ENCODE measurements at regions of chr11 and their contacts with region 1.

Region 1: DNA sequence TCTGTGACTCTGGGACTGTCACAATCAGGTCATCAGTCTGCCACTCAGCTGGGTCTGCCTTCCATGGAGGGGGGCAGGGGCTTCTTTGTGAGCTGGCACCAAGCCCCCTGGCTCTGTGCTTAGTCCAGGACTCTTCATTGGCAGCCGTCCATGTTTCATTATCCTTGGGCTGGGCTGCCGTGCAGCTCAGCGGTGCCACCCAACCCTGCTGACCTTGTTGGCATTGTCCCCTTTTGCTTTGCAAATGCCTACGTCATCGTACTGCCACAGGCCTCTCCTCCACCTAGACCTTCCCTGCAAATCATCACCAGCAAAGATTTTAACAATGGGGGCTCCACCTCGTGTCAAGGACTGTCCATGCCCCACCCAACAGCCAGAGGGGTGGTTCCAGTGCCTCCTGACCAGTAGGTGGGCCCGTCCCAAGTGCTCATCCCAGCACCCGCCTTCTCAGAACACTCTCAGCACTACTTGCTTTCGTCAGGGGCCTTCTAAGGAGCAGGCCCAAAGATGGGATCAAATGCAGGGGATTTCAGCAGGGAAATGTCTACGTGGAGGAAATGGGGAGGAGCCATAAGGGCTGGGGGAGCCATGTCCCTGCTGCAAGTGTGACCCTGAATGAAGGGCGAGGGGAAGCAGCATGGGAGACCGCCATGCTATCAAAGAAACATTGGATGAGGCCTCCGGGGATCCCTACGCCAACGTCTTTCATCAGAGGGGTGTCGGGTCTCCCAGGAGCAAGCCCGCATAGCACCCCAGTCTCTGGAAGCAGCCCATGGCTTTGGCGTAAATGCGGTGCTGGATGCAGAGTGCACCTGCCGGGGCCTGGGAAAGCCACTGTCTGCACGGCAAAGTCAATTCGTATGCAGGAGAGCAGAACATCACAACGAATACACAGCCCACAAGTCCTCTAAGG is 18.2 kb downstream of the KRTAP5-6 start:
- DNase-seq: peak; percentile 74

Region 2: DNA sequence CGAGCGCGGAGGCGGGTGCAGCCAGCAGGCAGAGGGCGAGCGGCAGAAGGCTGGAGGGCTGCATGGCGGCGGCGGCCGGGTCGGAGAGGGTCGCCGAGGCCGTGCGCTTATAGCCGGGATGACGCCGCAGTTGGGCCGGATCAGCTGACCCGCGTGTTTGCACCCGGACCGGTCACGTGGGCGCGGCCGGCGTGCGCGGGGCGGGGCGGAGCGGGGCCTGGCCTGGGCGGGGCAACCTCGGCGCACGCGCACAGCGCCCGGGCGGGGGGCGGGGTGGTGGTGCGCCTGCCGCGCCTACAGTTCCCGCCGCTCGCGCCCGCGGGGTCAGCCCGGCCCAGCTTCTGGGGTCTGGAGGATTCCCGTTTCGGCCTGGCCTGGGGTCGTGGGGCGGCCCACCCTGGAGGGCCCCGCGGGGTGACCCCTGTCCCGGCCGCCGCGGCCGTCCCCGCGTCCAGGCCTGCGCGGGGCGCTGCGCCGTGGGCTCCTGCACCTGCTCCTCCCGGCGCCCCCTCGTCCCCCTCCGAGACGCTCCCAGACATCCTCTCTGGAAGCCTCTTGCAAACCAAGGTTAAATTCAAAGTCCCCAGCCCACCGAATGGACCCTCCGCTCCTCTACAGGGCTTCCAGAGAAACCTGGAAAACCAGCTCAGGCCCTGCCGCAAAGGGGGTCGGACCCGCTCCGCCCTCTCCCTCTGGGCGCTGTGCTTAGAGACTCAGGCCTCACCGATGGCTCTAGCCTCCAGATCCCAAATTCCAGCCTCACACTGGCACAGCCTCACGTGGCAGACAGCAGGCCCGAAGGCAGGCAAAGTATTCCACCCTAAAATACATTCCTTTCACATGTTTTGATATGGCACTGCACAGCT is 48.8 kb after region 1 on chr11 and contains the start of gene CTSD:
- intact Hi-C with region 1: loop called (anchors 5 kb)
- DNase-seq: peak; percentile 97
- total RNA-seq, gene CTSD: 521 TPM